MCF 10A (cell line): ENCODE measurements at regions of chr7 and their contacts with region 1.

Region 1: GRCh38 chr7:139620676-139621344 is 97.3 kb downstream of the CLEC2L start:
- DNase-seq: peak; percentile 39
- H3K4me3 Mint-ChIP-seq: no peak overlapping the region
- H3K27ac Mint-ChIP-seq: no peak overlapping the region
- H3K4me1 Mint-ChIP-seq: peaks cover 10% of the 10 kb centered on the region
- H3K27me3 Mint-ChIP-seq: no peaks in the 10 kb centered on the region
- CTCF ChIP-seq: peak; percentile 73

Region 2: GRCh38 chr7:139589474-139589873 is 31.3 kb before region 1 on chr7:
- CTCF ChIA-PET with region 1: interaction called, 10 read pairs
- POLR2A ChIA-PET with region 1: no interaction called
- intact Hi-C with region 1: no loop called
- DNase-seq: no peak
- H3K4me3 Mint-ChIP-seq: no peak overlapping the region
- H3K27ac Mint-ChIP-seq: peak overlapping the region; percentile 46
- H3K4me1 Mint-ChIP-seq: peaks cover 6% of the 10 kb centered on the region
- H3K27me3 Mint-ChIP-seq: no peaks in the 10 kb centered on the region
- CTCF ChIP-seq: no peak

Region 3: DNA sequence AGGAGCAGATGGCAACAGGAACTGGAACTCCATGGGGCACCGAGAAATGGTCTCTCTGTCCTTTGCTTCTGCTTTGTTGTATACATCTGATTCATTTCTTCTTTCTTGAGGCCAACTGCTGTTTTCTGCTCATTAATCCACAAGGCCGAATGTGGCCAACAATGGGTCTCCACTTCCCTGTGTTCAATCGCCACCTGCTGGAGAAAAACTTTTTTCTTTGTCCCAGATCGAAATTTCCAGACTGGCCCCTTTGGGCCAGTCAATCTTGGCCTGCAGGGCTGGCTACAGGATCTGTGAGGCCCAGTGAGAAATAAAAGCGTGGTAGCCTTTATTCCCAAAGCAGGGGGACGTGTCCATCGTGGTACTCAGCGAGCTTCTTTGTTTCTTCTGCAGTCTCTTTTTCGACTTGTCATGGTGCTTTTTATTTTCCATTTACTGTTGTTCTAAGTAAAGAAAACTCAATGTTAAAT is 383.1 kb after region 1 on chr7:
- CTCF ChIA-PET with region 1: interaction called, 181 read pairs
- POLR2A ChIA-PET with region 1: interaction called, 4 read pairs
- intact Hi-C with region 1: loop called (anchors 1 kb)
- DNase-seq: peak; percentile 80
- H3K4me3 Mint-ChIP-seq: no peak overlapping the region
- H3K27ac Mint-ChIP-seq: no peak overlapping the region
- H3K4me1 Mint-ChIP-seq: no peaks in the 10 kb centered on the region
- H3K27me3 Mint-ChIP-seq: no peaks in the 10 kb centered on the region
- CTCF ChIP-seq: peak; percentile 56

Region 4: DNA sequence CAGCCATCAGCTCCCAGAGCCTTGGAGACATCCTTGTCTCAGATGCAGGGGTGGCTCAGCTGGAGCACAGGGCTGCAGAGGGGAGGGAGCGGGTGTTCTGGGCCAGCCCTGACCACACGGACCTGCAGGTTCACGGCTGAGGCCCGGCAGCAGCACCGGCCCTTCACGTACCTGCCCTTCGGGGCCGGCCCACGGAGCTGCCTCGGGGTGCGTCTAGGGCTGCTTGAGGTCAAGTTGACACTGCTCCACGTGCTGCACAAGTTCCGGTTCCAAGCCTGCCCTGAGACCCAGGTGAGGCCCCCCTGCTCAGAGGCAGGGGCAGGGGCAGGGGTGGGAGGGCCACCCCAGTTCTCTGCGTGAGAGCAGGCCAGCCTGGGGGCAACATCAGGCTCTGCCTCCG is 396.7 kb after region 1 on chr7:
- CTCF ChIA-PET with region 1: interaction called, 12 read pairs
- POLR2A ChIA-PET with region 1: no interaction called
- intact Hi-C with region 1: no loop called
- DNase-seq: no peak
- H3K4me3 Mint-ChIP-seq: no peak overlapping the region
- H3K27ac Mint-ChIP-seq: no peak overlapping the region
- H3K4me1 Mint-ChIP-seq: no peaks in the 10 kb centered on the region
- H3K27me3 Mint-ChIP-seq: no peaks in the 10 kb centered on the region
- CTCF ChIP-seq: no peak